ENCODE measurements at regions of chr11 and their contacts with region 1.

Region 1: DNA sequence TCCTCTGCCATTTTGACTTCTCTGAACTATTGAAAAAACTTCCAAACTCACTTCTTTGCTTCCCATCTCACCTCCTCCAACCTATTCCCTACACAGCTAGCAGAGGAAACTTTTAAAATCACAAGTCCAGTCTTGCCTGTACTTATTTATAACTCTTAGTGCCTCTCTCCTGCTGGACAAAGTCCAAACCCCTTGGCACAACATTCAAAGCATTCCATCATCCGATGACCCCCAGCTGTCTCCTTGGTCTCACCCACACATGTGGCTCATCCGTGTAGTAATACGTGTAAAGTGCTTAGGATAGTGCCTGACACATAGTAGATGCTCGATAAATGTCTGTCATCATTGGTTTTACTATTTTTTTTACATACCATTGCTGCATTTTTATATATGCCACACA is 101.4 kb downstream of the PARVA start:
- DNase-seq: no peak
- H3K4me3 ChIP-seq: no peak overlapping the region
- H3K27ac ChIP-seq: no peak overlapping the region
- H3K4me1 ChIP-seq: no peaks in the 10 kb centered on the region
- H3K27me3 ChIP-seq: no peaks in the 10 kb centered on the region
- CTCF ChIP-seq: no peak

Region 2: GRCh38 chr11:12441231-12441861 is 37.4 kb before region 1 on chr11:
- CTCF ChIA-PET with region 1: no interaction called
- POLR2A ChIA-PET with region 1: interaction called, 23 read pairs
- intact Hi-C with region 1: no loop called
- DNase-seq: no peak
- H3K4me3 ChIP-seq: no peak overlapping the region
- H3K27ac ChIP-seq: no peak overlapping the region
- H3K4me1 ChIP-seq: no peaks in the 10 kb centered on the region
- H3K27me3 ChIP-seq: no peaks in the 10 kb centered on the region
- CTCF ChIP-seq: no peak